Activated CD4-positive, alpha-beta T cell treated with anti-CD3 and anti-CD28 coated beads for 36 hours (primary cell): ENCODE measurements at regions of chr7 and their contacts with region 1.

Region 1: GRCh38 chr7:73463966-73464365 is 30.4 kb downstream of the FZD9 start:
- DNase-seq: no peak
- ATAC-seq: no peak
- H3K4me3 Mint-ChIP-seq: no peak overlapping the region
- H3K27ac Mint-ChIP-seq: no peak overlapping the region
- H3K4me1 Mint-ChIP-seq: no peaks in the 10 kb centered on the region
- H3K27me3 Mint-ChIP-seq: no peaks in the 10 kb centered on the region

Region 2: GRCh38 chr7:73423519-73424488 is 40.2 kb before region 1 on chr7:
- CTCF ChIA-PET with region 1: no interaction called
- POLR2A ChIA-PET with region 1: no interaction called
- intact Hi-C with region 1: no loop called
- DNase-seq: no peak
- ATAC-seq: no peak
- H3K4me3 Mint-ChIP-seq: no peak overlapping the region
- H3K27ac Mint-ChIP-seq: no peak overlapping the region
- H3K4me1 Mint-ChIP-seq: peaks cover 6% of the 10 kb centered on the region
- H3K27me3 Mint-ChIP-seq: peaks cover 2% of the 10 kb centered on the region

Region 3: DNA sequence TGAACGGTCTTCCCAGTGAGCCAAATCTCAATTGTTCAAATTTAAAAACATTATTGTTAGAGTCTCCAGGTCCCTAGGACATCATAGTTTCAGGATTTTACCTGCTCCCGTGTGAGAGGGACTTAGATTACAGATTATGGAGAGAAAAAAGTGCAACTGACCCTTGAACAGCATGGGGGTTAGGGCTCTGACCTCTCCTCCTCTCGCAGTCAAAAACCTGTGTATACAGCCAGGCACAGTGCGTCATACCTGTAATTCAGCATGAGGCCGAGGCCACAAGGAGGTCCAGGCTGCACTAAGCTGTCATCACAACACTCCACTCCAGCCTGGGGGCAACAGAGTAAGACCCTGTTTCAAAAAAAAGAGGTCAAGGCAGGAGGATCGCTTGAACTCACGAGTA is 32.7 kb after region 1 on chr7:
- CTCF ChIA-PET with region 1: no interaction called
- POLR2A ChIA-PET with region 1: no interaction called
- intact Hi-C with region 1: loop called in 1 of 2 experiments (anchors 5 kb)
- DNase-seq: no peak
- ATAC-seq: no peak
- H3K4me3 Mint-ChIP-seq: no peak overlapping the region
- H3K27ac Mint-ChIP-seq: no peak overlapping the region
- H3K4me1 Mint-ChIP-seq: no peaks in the 10 kb centered on the region
- H3K27me3 Mint-ChIP-seq: no peaks in the 10 kb centered on the region

Region 4: GRCh38 chr7:73533742-73534141 is 69.8 kb after region 1 on chr7:
- CTCF ChIA-PET with region 1: no interaction called
- POLR2A ChIA-PET with region 1: no interaction called
- intact Hi-C with region 1: no loop called
- DNase-seq: no peak
- ATAC-seq: no peak
- H3K4me3 Mint-ChIP-seq: no peak overlapping the region
- H3K27ac Mint-ChIP-seq: no peak overlapping the region
- H3K4me1 Mint-ChIP-seq: no peaks in the 10 kb centered on the region
- H3K27me3 Mint-ChIP-seq: no peaks in the 10 kb centered on the region